Posterior cingulate gyrus (tissue), 11 donors: ENCODE measurements at regions of chr1 and their contacts with region 1.

Region 1: DNA sequence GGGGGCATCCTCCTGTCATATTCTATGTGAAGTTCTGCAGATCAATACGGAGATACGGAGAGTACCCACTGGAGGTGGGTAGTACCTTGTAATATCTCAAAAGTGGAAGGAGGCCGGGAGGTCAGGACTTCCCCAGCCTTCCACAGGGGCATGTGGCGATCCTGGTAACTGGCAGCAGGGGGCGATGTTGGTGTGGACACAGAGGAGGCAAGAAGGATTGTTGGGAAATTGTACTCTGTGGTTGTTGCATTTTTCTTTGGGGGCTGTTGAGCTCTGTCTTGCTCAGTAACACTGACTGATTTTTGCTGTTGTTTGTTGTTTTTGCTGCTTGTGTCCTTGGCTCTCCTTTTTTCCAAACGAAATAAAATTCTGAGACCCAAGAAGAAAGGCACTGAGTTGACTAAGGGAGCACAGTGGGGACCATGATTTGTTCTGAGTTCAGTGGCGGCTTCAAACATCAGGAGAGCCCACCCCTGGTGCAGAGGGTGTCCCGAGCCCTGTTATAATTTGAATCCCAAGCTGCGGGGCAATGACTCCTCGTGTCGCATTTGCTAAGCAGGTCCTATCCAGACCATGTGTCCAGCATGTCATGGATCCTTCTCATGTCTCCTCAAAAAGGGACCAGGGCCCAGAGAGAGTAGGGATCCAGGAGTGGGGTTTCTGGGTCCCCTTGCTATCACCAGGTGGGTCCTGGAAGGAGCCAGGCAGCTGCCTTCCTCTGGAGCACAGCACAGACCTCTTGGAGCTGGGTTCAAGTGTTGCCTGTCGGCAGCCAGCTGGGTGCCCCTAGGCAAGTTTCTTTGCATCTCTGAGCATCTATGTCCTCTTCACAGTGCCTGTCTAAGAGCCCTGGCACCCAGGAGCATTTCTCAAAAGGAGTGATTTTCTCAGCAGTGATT is 22.8 kb downstream of the LHX4 start:
- DNase-seq: peak in 7 of 10 donors; percentile 44 to 87 (median 57)

Region 2: GRCh38 chr1:180482425-180483275 is 229.8 kb after region 1 on chr1:
- intact Hi-C with region 1: loop called (anchors 5 kb)
- DNase-seq: no peak